ENCODE measurements at regions of chr7 and their contacts with region 1.

Region 1: DNA sequence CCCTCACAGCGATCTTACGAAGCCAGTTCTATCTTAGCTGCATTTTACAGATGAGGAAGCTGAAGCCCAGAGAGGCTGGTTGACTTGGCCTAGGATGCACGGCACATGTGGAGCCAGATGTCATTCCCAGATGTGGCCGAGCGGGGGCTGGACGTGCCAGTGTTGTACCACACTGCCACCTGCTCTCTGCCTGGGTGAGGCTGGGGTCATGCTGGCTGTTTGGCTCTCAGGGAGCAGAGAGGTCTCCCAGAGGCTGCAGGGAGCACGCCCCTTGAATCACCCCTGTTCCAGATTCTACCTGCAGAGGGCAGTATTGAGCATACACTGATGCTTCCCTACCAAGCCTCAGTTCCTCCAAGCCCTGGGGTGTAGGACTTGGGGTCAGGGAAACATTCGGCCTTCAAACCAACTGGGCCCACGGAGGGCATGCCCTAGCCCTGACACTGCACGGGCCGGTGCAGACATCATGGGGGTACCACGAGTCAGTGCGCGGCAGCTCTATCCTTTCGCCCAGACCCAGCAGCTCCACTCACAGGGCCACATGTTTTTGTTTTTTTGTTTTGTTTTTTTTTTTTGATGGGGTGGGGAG is 3.8 kb upstream of the GTF2IRD1 start:
- DNase-seq: no peak
- H3K4me3 ChIP-seq: no peak overlapping the region
- H3K27me3 ChIP-seq: no peaks in the 10 kb centered on the region
- CTCF ChIP-seq: peak; percentile 83

Region 2: DNA sequence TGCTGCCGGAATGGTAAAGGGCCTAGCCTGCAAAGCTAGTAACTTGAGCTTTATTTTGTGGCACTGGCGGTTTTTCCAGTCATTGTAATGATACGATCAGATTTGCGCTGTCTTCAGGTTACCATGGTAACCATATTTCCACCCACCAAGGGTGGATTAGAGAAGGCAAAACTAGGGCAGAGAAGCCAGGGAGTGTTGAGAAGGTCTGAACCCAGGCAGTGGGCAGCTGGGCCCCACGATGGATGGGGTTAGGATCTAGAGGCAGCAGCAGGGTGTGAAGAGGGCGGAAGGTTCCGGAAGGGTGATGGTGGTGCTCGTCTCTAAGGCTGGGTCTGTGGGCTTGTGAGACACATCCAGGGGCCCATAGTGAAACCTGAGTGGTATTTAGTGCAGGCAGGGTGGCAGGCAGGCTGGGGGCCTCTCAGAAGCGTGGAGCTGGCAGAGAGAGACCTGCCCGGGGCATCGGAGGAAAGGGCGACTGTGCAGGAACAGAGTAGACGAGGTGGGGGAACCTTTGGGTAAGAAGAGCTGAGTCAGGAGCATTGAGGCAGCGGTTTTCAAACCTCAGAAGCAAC is 119.7 kb after region 1 on chr7:
- CTCF ChIA-PET with region 1: interaction called, 18 read pairs
- POLR2A ChIA-PET with region 1: no interaction called
- DNase-seq: no peak
- H3K4me3 ChIP-seq: no peak overlapping the region
- H3K27me3 ChIP-seq: no peaks in the 10 kb centered on the region
- CTCF ChIP-seq: no peak

Region 3: DNA sequence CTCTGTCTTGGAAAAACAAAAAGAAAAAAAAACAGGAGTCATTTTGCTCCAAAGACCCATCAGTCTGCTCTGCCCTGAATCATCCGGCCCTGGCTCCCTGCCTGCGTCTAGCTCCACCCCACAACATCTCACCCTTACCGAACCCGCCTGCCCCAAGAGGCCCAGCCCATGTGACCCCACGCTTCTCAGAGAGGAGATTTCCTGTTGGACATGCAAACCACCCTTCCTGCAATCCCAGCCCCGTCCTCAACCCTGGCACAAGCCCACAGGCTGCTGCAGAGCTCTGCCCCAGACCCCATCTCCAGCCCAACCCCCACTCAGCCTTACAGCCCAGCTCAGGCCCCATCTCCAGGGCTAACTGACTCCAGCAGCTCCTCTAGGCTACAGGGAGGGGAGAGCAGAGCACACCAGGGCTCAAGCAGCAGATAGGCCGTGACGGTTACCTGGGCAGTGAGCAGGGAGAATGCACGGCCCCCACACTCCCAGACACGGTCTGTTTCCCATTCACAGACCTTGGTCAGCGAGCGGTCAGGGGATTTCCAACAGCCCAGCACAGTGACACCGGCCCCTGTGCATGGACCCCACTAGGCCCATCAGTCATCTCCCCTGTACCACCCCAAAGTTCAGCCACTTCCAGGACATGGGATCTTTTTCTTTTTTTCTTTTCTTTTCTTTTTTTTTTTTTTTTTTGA is 137.7 kb after region 1 on chr7:
- CTCF ChIA-PET with region 1: interaction called, 13 read pairs
- POLR2A ChIA-PET with region 1: no interaction called
- DNase-seq: peak; percentile 65
- H3K4me3 ChIP-seq: no peak overlapping the region
- H3K27me3 ChIP-seq: no peaks in the 10 kb centered on the region
- CTCF ChIP-seq: no peak